Ascending aorta (tissue), 2 donors: ENCODE measurements at regions of chr4 and their contacts with region 1.

Region 1: DNA sequence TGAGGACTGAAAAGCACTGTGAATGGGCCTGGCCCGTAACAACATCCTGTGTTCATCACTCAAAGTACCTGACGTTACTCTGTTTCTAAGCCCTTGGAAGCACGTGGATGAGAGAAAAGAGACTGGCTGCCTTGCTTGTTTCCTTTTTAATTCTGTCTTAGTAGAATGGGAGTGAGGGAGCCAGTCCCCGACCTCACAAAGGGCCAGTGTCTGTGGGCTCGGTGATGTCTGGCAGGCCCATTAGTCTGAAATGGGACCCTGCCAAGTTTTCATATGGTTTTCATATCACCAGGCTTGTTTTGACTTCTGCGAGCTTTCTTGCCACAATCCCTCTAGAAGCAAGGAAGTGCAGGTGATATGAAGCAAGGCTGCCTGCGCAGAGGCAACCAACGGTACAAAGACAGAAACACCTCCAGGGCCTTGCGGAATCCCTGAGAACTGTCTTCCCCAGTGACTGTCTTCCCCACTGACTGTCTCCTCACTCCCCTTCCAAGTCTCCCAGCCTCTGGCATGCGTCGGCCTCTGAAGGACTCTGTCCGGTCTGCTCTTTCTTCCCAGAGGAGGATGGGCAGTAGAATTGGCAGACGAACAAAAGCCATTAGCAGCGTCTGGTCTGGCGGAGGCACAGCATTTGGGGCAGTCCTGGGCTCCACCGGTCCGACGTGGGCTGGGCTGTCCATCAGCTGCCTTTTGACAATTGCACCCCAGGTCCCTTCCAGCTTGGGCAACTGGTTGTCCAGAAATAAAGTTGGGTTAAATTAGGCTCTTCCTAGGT is 20.2 kb upstream of the RASL11B start:
- DNase-seq: no peak
- H3K4me3 ChIP-seq: no peak overlapping the region
- H3K27ac ChIP-seq: no peak overlapping the region
- H3K4me1 ChIP-seq: no peaks in the 10 kb centered on the region
- H3K27me3 ChIP-seq: no peaks in the 10 kb centered on the region
- CTCF ChIP-seq: no peak

Region 2: GRCh38 chr4:52968691-52969090 is 126.8 kb after region 1 on chr4:
- intact Hi-C with region 1: no loop called
- DNase-seq: no peak
- H3K4me3 ChIP-seq: no peak overlapping the region
- H3K27ac ChIP-seq: no peak overlapping the region
- H3K4me1 ChIP-seq: no peaks in the 10 kb centered on the region
- H3K27me3 ChIP-seq: no peaks in the 10 kb centered on the region
- CTCF ChIP-seq: no peak

Region 3: DNA sequence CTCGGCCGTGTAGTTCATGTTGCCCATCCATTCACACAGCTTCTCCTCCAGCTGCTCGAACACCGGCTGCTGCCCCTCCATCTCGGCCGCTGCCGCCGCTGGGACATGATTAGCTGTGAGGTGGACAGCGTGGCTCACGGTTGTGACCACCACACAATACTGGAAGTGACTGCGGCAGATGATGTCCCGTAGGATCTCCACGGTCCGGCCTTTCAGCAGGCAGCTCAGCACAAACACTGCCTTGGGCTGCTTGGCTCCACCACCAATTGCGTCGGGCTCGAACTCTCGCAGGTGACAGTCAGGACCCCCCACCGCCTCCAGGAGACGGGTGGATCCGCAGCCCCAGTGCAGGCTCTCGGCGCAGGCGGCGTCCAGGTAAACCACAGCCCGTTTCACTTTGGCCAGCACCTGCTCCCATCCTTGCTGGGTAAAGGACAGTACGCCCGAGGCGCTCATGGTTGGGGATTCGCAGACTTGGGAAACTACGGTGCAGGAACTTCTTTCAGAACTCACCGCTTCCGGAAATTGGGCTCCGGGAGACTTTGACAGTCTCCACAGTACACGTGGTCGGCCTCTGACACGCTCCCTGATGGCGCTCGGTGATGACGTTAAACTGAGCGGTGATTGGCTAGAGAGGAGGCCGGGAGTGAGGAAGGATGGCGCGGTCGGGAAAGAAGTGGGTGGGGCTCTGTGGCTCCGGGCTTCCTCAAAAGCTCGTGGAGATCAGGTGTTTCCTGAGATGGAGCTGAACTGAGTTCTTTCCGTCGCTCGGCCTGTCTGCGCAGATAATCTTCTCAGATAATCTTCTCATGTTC is 523.8 kb after region 1 on chr4 and contains the start of gene SCFD2:
- intact Hi-C with region 1: no loop called
- DNase-seq: peak; percentile 95 to 99
- H3K4me3 ChIP-seq: peak within 1 kb of the TSS; percentile 69 to 97
- H3K27ac ChIP-seq: peak within 1 kb of the TSS; percentile 30 to 53
- H3K4me1 ChIP-seq: peaks cover 4 to 25% of the 10 kb centered on the region in 2 donors
- H3K27me3 ChIP-seq: no peaks in the 10 kb centered on the region
- CTCF ChIP-seq: no peak
- total RNA-seq, gene SCFD2: 22.8 TPM

Region 4: GRCh38 chr4:53706422-53707032 is 864.7 kb after region 1 on chr4:
- intact Hi-C with region 1: no loop called
- DNase-seq: no peak
- H3K4me3 ChIP-seq: no peak overlapping the region
- H3K27ac ChIP-seq: no peak overlapping the region
- H3K4me1 ChIP-seq: peaks cover 0 to 16% of the 10 kb centered on the region in 2 donors
- H3K27me3 ChIP-seq: no peaks in the 10 kb centered on the region
- CTCF ChIP-seq: peak; percentile 26 to 67 (median 57)

Region 5: GRCh38 chr4:54487491-54487890 is 1645.6 kb after region 1 on chr4:
- intact Hi-C with region 1: loop called (anchors 5 kb)
- DNase-seq: no peak
- H3K4me3 ChIP-seq: no peak overlapping the region
- H3K27ac ChIP-seq: no peak overlapping the region
- H3K4me1 ChIP-seq: no peaks in the 10 kb centered on the region
- H3K27me3 ChIP-seq: no peaks in the 10 kb centered on the region
- CTCF ChIP-seq: no peak